ENCODE measurements at regions of chr9 and their contacts with region 1.

Region 1: DNA sequence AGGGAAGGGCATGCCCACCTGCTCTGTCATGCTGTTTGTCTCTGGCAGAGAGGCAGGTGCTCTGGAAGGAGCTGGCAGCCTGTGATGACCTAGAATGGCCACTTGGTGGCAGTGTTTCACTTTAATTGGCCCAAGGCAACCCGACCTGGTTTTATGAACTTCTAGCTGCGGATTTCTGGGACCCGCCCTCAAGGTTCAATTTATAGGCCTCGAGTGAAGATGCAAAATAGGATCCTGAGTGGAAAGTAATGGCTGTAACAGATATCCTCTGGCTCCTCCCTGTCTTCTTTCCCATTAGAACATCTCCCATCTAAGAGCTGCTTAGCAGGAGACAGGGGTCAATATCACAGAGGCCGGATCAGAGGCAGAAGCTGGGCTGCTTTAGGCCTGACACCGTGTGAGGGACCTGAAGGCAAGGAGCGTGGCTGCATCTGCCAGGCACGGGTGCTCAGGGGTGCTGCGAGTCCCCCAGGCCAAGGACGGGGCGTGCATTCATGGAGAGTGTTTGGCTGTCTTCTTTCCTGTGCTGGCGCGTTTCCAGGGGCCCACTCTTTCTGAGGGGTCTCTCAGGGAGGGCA is 56.7 kb upstream of the SLC28A3 start:
- DNase-seq: peak in 1 of 2 donors; percentile 78
- H3K4me3 ChIP-seq: no peak overlapping the region
- H3K27ac ChIP-seq: no peak overlapping the region
- H3K4me1 ChIP-seq: no peaks in the 10 kb centered on the region
- H3K27me3 ChIP-seq: no peaks in the 10 kb centered on the region
- CTCF ChIP-seq: peak; percentile 49 to 87 (median 85)

Region 2: DNA sequence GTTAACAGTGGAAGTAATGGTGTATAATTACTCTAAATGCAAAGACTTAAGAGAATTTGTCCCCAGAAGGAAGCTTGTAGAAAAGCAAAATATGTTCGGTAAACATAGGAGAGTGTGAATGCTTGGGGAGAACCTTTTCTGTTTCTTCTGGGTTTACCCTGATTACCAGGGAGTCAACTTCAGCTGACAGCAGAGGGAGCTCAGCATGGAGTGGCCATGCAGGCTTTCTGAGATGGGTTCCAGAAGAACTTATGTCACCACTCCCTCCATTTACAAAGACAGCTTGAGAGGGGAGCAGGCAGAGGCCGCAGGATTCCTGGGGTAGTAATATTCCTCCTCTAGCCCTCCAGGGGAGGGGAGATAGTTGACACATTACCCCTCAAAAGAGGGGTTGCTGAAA is 152.4 kb before region 1 on chr9:
- intact Hi-C with region 1: no loop called
- DNase-seq: no peak
- H3K4me3 ChIP-seq: no peak overlapping the region
- H3K27ac ChIP-seq: no peak overlapping the region
- H3K4me1 ChIP-seq: no peaks in the 10 kb centered on the region
- H3K27me3 ChIP-seq: no peaks in the 10 kb centered on the region
- CTCF ChIP-seq: no peak

Region 3: GRCh38 chr9:84447305-84447704 is 50.1 kb after region 1 on chr9:
- intact Hi-C with region 1: no loop called
- DNase-seq: no peak
- H3K4me3 ChIP-seq: no peak overlapping the region
- H3K27ac ChIP-seq: no peak overlapping the region
- H3K4me1 ChIP-seq: no peaks in the 10 kb centered on the region
- H3K27me3 ChIP-seq: no peaks in the 10 kb centered on the region
- CTCF ChIP-seq: no peak

Region 4: DNA sequence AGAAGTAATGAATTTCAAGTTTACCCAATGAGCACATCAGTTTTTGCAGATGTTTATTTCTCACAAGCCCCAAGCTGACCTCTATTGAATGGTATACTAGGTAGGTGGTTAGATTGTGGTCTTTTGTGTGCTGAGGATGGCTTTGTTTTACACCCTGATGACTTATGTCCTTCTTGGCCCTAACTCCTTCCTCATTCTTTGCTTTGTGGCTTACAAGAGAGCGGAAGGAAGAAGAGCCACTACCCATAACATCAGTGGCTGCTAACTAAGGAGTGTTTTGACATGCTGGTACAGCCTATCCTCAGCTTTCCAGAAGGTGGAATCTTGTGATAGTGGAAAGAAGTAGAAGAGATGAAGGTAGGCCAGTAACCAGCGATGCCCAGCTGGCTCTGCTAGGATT is 186.6 kb after region 1 on chr9:
- intact Hi-C with region 1: no loop called
- DNase-seq: no peak
- H3K4me3 ChIP-seq: no peak overlapping the region
- H3K27ac ChIP-seq: no peak overlapping the region
- H3K4me1 ChIP-seq: no peaks in the 10 kb centered on the region
- H3K27me3 ChIP-seq: no peaks in the 10 kb centered on the region
- CTCF ChIP-seq: no peak

Region 5: GRCh38 chr9:84953797-84954705 is 556.8 kb after region 1 on chr9:
- intact Hi-C with region 1: loop called (anchors 2 kb)
- DNase-seq: peak in 1 of 2 donors; percentile 83
- H3K4me3 ChIP-seq: no peak overlapping the region
- H3K27ac ChIP-seq: no peak overlapping the region
- H3K4me1 ChIP-seq: no peaks in the 10 kb centered on the region
- H3K27me3 ChIP-seq: no peaks in the 10 kb centered on the region
- CTCF ChIP-seq: peak; percentile 62 to 95 (median 91)

Region 6: DNA sequence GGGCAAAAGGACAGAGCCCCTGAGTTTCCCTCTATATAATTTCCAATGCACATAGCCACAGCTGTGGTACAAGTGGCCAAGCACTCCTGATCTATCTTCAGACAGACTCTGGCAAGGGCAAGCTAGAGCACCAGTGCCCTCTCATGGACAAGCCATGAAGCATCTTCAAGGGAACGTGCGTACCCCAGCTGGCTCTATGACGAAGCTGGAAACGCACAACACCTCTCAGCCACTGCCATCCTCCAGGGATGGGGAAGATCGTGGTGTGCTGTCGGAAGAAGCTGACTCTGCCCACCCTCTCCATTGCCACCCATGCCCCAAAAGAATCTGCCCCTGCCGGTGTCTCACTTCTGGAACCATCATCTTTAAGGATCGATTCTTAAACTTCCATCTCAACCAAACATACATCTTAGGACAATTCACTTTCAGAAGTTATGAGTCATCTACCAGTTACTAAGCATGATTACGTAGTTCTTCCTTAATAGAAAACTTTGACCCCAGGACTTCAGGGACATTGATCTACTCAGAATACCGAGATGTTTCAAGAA is 861.7 kb after region 1 on chr9:
- intact Hi-C with region 1: loop called (anchors 2 kb)
- DNase-seq: no peak
- H3K4me3 ChIP-seq: no peak overlapping the region
- H3K27ac ChIP-seq: no peak overlapping the region
- H3K4me1 ChIP-seq: no peaks in the 10 kb centered on the region
- H3K27me3 ChIP-seq: no peaks in the 10 kb centered on the region
- CTCF ChIP-seq: peak in 2 of 3 experiments; percentile 54 to 66

Region 7: DNA sequence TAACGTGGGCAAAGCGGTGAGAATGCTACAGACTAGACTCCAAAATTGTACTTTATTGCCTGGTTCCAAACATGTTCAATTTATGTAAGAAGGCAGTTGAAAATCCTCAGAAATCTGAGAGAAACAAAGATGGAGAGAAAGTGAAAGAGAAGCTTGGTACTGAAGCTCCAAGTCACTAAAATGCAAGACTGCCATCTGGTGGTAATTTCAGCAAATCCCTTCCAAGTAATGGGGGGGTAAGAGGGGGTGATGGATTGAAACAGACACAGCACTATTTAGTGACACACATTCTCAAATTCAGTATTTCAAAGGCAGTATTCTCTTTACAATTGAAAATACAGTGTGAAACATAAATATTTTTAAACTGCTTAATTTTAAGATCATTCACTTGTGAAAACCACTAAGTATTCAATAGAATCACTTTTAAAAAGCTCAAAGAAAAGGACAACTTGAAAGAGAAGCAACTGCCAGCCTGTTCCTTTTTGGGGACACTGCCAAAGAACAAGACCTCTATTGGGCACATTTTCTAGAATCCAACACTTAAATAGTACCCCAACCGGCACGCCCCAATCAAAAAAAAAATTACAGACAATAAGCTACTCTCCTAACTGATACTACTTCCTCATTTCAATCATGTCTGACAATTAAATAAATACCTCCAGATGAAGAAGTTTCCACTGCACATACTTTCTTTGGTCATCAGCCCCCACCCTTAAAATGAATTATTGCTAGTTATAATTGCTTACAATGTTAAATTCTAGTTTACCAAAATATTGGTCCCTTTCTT is 1213.0 kb after region 1 on chr9:
- intact Hi-C with region 1: loop called (anchors 2 kb)
- DNase-seq: no peak
- H3K4me3 ChIP-seq: peak overlapping the region in 1 of 2 donors; percentile 34
- H3K27ac ChIP-seq: no peak overlapping the region
- H3K4me1 ChIP-seq: no peaks in the 10 kb centered on the region
- H3K27me3 ChIP-seq: no peaks in the 10 kb centered on the region
- CTCF ChIP-seq: peak; percentile 63 to 83 (median 76)